Activated T-helper 2 cell treated with anti-CD3 and anti-CD28 coated beads, Interferon-gamma antibody, Interleukin-2, Interleukin-4, amounts not matched to agents 10 μg/mL and 5 μg/mL and 100 μg/mL, durations not matched to agents 14 hours and 24 hours and 36 hours (primary cell): ENCODE measurements at regions of chr11 and their contacts with region 1.

Region 1: GRCh38 chr11:13288375-13289029 is 10.9 kb downstream of the BMAL1 start:
- DNase-seq: no peak
- H3K4me3 Mint-ChIP-seq: peak overlapping the region; percentile 47
- H3K27ac Mint-ChIP-seq: peak overlapping the region; percentile 91
- H3K4me1 Mint-ChIP-seq: peaks cover 46% of the 10 kb centered on the region
- H3K27me3 Mint-ChIP-seq: no peaks in the 10 kb centered on the region

Region 2: GRCh38 chr11:13276832-13277767 is 11.4 kb before region 1 on chr11:
- intact Hi-C with region 1: loop called (anchors 1 kb)
- DNase-seq: peak; percentile 97
- H3K4me3 Mint-ChIP-seq: peak overlapping the region; percentile 98
- H3K27ac Mint-ChIP-seq: peak overlapping the region; percentile 79
- H3K4me1 Mint-ChIP-seq: peaks cover 45% of the 10 kb centered on the region
- H3K27me3 Mint-ChIP-seq: peaks cover 57% of the 10 kb centered on the region

Region 3: DNA sequence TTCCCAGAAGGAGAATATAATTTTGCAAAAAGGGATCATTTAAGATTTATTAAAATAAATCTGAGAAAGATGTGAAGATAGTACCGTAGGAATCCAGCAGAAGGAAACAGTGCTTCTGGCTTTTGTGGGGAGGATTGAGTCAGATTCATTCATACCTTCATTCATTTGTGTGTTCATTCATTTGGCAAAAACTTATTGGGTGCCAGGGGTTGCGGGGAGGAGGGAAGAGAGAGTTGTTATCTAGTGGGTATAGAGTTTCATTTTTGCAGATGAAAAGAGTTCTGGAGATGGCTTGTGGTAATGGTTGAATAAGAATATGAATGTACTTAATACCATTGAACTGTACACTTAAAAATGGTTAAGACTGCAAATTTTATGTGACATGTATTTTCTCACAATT is 20.2 kb after region 1 on chr11:
- intact Hi-C with region 1: loop called (anchors 2 kb)
- DNase-seq: no peak
- H3K4me3 Mint-ChIP-seq: no peak overlapping the region
- H3K27ac Mint-ChIP-seq: no peak overlapping the region
- H3K4me1 Mint-ChIP-seq: peaks cover 14% of the 10 kb centered on the region
- H3K27me3 Mint-ChIP-seq: no peaks in the 10 kb centered on the region

Region 4: DNA sequence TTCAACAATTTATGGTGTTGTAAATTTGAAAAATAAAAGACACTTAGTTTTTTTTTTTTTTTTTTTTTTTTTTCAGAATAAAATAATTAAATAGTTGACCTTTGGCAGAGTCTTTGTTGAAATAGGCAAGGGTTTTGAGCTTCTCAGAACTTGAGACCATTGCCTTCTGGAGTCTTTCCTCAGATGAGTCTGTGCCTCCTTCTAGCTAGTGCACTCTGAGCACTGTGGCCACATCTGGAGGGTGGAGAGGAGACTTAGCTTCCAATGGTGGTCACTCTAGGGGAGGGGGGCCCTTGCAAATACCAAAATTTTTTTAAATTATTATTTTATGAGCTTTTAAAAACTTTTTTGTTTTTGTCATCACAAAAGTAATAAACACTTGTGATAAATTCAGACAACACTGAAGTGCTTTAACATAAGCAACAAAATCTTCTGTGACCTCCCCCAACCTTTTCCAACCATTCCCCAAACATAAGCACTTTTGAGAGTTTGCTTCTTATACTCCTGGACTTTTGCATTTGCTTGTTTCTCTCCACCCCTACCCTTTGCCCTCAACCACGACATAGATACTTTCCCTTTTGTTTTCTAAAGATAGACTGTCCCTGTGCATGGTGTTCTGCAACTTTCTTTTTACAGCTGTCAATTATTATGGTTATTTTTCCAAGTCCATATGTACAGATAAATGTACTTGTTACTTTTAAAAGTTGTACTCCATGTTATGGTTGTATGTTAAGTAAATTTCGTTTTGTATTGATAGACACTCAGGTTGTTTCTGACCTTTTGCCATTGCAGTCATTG is 30.2 kb after region 1 on chr11:
- intact Hi-C with region 1: loop called (anchors 1 kb)
- DNase-seq: no peak
- H3K4me3 Mint-ChIP-seq: peak overlapping the region; percentile 27
- H3K27ac Mint-ChIP-seq: peak overlapping the region; percentile 55
- H3K4me1 Mint-ChIP-seq: peaks cover 22% of the 10 kb centered on the region
- H3K27me3 Mint-ChIP-seq: no peaks in the 10 kb centered on the region

Region 5: GRCh38 chr11:13335319-13335718 is 46.8 kb after region 1 on chr11:
- intact Hi-C with region 1: loop called (anchors 1 kb)
- DNase-seq: peak; percentile 51
- H3K4me3 Mint-ChIP-seq: no peak overlapping the region
- H3K27ac Mint-ChIP-seq: no peak overlapping the region
- H3K4me1 Mint-ChIP-seq: peaks cover 44% of the 10 kb centered on the region
- H3K27me3 Mint-ChIP-seq: no peaks in the 10 kb centered on the region